Heart right ventricle (tissue), 16 donors: ENCODE measurements at regions of chr10 and their contacts with region 1.

Region 1: DNA sequence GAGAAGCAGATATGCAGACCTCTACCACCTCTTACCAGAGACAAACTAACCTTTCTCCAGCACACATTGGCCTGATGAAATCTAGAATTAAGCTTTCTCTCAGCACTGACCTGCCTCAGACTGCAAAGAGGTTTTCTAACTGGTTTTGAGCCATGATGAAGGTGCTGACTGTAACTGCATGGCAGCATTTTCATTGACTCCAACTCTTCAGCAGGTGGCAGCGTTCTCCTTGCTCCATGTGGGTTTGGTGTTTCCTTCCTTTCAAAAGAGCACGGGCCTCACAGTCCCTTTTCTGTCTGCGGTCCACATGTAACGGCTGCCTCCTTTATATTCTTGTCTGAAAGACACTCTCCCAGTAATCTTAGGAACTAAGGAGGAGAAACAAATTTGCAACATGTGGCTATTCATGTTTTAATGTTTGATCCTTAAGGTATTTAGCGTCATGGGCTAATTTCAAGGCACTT is 12.6 kb downstream of the KLLN start:
- DNase-seq: peak; percentile 24 to 67
- ATAC-seq: peak; percentile 79 to 98 (median 92)
- H3K4me3 ChIP-seq: no peak overlapping the region
- H3K27ac ChIP-seq: no peak overlapping the region
- H3K4me1 ChIP-seq: peaks cover 0 to 5% (median 0%) of the 10 kb centered on the region in 9 donors
- H3K27me3 ChIP-seq: no peaks in the 10 kb centered on the region
- CTCF ChIP-seq: peak; percentile 37 to 79 (median 71)

Region 2: DNA sequence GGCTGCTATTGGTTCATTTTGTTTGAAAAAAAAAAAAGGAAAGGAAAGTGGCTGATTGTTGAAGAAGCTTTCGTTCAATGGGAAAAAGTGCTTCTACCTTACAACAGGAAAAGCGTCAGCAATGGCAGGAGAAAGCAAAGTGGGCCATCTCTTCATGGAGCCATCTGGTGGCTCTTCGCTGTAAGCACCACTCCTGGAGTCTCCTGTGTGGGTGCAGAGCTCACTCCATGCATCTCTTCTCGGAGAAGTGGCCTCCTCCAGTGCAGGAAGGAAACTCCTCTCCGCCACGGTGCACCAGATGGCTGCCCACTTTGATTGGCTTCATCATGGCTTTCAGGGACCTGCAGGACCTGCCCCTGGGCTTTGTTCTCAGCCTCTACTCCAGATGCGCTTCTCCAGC is 263.6 kb after region 1 on chr10:
- intact Hi-C with region 1: loop called in 3 of 10 experiments (anchors 5 to 10 kb)
- DNase-seq: peak; percentile 20 to 48
- ATAC-seq: peak; percentile 66 to 91 (median 84)
- H3K4me3 ChIP-seq: no peak overlapping the region
- H3K27ac ChIP-seq: no peak overlapping the region
- H3K4me1 ChIP-seq: peaks cover 0 to 63% (median 7%) of the 10 kb centered on the region in 9 donors
- H3K27me3 ChIP-seq: no peaks in the 10 kb centered on the region
- CTCF ChIP-seq: peak; percentile 12 to 75 (median 65)